ENCODE measurements at regions of chr14 and their contacts with region 1.

Region 1: DNA sequence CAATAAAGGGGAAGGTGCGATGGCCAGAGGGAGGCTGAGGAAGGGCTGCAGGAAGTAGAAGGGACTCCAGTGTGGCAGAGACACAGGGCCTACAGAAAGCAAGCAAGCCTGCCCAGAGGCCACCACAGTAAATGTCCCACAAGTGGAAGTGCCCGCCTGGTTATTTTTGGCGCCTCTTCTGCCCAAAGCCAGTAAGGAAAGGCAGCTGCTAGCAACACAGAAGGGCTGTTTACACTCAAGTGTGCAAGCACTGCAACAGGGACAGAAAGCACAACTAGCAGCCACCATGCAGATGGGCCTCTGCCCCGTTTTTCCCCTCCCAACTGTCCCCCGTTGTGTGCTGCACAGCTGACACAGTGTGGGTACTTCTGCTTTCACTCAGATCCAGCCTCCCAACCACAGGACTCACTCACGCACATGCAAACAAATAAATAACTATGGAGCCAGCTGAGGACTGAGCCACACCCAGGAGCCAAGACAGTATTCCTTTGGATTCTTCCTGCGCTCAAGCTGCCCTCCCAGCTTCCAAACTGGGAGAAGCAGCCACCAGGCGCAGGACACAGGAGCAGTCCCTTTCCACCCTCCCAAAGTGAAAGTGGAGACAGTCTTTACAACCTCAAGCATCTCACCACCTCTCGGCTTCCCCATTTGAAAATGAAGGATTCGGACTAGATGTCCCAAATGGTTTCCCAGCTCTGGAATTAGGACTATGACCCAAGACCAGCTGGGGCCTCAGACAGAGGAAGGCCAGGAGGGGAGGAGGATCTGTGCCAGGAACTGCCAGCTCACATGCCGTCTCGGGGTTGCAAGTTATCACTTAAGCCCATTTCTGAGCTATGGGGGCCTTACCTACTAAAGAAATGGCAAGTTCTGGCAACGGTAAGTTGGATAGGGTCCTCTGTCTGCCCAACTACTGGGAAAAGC is 40.0 kb upstream of the PNMA1 start:
- DNase-seq: peak; percentile 85
- H3K4me3 Mint-ChIP-seq: peak overlapping the region; percentile 87
- H3K27ac Mint-ChIP-seq: peak overlapping the region; percentile 96
- H3K4me1 Mint-ChIP-seq: peaks cover 90% of the 10 kb centered on the region
- H3K27me3 Mint-ChIP-seq: no peaks in the 10 kb centered on the region

Region 2: DNA sequence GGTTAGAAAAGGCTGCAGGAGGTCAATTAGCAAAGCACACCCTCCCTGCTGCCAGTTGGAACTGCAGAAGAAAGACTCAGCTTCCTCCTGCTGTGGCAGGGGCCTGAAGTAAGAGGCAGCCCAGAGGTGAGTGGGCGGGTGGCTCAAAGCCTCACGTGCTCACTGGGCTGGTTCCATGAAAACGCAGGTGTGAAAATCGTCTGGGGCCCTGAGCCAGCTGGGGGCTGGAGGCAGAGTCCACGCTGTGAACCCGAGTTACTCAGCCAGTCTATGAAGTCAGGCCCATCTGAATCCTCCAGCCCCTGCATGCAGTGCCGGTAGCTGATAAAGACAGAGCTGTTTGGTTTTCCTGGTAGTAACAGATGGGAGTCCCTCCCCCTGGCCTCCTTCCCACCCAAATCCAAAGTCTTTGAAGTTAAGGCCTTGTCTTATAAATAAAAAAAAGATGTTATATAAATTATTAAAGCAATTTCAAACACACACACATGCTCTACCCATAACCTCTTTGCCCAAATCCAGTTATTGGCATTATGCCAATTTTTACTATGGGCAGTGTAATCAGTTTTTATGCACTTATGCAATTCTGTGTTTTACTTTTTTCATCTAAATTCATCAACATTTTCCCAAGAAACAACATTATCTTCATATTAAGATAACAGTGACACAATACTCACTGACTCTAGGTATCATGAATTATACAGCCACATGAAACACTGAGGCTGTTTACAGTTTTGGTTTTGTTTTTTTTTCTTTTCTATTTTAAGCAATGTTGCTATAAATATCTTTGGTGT is 17.8 kb after region 1 on chr14:
- intact Hi-C with region 1: loop called (anchors 2 kb)
- DNase-seq: peak; percentile 87
- H3K4me3 Mint-ChIP-seq: peak overlapping the region; percentile 49
- H3K27ac Mint-ChIP-seq: peak overlapping the region; percentile 81
- H3K4me1 Mint-ChIP-seq: peaks cover 55% of the 10 kb centered on the region
- H3K27me3 Mint-ChIP-seq: no peaks in the 10 kb centered on the region

Measured in activated CD4-positive, alpha-beta T cell treated with anti-CD3 and anti-CD28 coated beads, Interleukin-2, amount 10 ng/mL, durations not matched to agents 24 days and 14 days (primary cell).